ENCODE measurements at regions of chr13 and their contacts with region 1.

Region 1: GRCh38 chr13:113001241-113002140 is 32.5 kb downstream of the MCF2L start:
- DNase-seq: no peak
- ATAC-seq: peak; percentile 31
- H3K4me3 Mint-ChIP-seq: no peak overlapping the region
- H3K27ac Mint-ChIP-seq: peak overlapping the region; percentile 27; the same call in 1 of the 2 replicates
- H3K4me1 Mint-ChIP-seq: peaks cover 2% of the 10 kb centered on the region; the same call in 1 of the 2 replicates
- H3K27me3 Mint-ChIP-seq: no peaks in the 10 kb centered on the region
- CTCF ChIP-seq: no peak

Region 2: DNA sequence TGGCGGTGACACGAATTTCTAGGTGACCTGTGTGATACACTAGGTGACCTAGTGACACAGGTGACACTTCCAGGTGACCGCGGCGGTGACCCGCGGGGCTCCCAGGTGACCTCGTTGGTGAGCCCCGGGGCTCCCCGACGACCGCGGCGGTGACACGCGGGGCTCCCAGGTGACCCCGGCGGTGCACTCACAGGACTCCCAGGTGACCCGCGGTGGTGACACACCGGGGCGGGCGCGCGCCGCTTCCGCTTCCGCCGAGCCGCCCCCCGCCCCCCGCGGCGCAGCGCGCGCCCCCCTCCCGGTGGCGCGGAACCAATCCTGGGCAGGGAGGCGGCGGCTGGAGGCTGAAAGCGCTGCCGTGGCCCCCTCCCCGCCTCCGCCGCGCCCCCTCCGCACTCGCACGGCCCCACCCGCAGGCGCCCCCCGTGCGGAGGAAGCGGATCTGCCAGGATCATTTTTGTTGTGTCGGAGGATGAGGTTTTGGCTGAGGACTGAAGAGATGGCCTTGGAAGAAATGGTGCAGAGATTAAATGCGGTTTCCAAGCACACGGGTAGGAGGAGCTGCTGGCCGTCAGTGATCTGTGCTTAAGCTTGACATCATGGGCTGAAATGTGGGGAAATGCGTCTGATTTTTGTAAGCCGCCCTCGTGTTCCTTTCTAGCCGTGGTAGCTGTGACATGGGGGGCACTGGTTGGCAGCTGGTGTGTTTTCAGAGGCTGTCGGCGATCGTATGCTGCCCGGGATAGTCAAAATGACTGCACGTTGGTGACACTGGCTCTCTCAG is 32.4 kb before region 1 on chr13 and contains the start of gene MCF2L:
- CTCF ChIA-PET with region 1: interaction called, 12 read pairs
- POLR2A ChIA-PET with region 1: no interaction called
- DNase-seq: no peak
- ATAC-seq: peak; percentile 62
- H3K4me3 Mint-ChIP-seq: peak within 1 kb of the TSS; percentile 83
- H3K27ac Mint-ChIP-seq: peak within 1 kb of the TSS; percentile 80
- H3K4me1 Mint-ChIP-seq: peaks cover 11% of the 10 kb centered on the region
- H3K27me3 Mint-ChIP-seq: peaks cover 16% of the 10 kb centered on the region
- CTCF ChIP-seq: no peak
- total RNA-seq, gene MCF2L: 34.8 to 35.4 TPM (median 34.9 TPM) in 3 replicates

Region 3: GRCh38 chr13:113022391-113023216 is 21.1 kb after region 1 on chr13:
- CTCF ChIA-PET with region 1: interaction called, 10 read pairs
- POLR2A ChIA-PET with region 1: no interaction called
- DNase-seq: peak; percentile 34
- ATAC-seq: peak; percentile 87
- H3K4me3 Mint-ChIP-seq: no peak overlapping the region
- H3K27ac Mint-ChIP-seq: peak overlapping the region; percentile 90
- H3K4me1 Mint-ChIP-seq: peaks cover 18% of the 10 kb centered on the region
- H3K27me3 Mint-ChIP-seq: no peaks in the 10 kb centered on the region
- CTCF ChIP-seq: no peak

Measured in WTC11 (cell line).